WTC11 (cell line): ENCODE measurements at regions of chr12 and their contacts with region 1.

Region 1: DNA sequence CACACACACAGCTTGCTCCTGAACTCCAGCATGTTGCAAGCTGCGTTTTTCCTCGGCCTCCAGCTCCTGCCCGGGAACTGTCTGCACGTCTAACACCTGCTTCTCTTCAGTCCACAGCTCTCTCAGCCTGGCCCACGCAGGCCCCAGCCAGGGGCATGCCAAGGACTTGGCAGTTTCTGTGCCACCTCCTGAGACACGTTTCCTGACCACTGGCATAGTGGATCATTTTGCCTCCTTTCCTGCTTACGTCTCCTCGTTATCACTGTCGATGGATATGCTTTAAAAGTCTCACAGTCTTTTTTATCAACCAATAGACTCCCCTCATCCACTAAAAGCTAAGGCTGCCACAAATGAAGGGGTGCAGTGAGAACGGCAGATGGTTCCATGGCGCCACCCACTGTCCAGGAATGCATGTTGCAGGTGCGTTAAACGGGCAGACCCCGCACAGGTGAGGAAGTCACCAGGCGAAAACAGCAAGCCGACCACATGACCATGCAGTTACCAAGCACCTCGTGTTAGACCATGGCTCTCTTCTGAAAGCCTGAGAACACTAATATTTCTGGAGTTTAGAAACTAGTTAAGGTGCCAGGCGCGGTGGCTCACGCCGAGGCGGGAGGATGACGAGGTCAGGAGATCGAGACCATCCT is 14.7 kb upstream of the TEAD4 start:
- DNase-seq: peak; percentile 90
- ATAC-seq: peak; percentile 98
- H3K4me3 Mint-ChIP-seq: no peak overlapping the region
- H3K27ac Mint-ChIP-seq: peak overlapping the region; percentile 3; the same call in 1 of the 2 replicates
- H3K4me1 Mint-ChIP-seq: peaks cover 3% of the 10 kb centered on the region
- H3K27me3 Mint-ChIP-seq: peaks cover 3% of the 10 kb centered on the region; the same call in 1 of the 2 replicates
- CTCF ChIP-seq: peak; percentile 87

Region 2: DNA sequence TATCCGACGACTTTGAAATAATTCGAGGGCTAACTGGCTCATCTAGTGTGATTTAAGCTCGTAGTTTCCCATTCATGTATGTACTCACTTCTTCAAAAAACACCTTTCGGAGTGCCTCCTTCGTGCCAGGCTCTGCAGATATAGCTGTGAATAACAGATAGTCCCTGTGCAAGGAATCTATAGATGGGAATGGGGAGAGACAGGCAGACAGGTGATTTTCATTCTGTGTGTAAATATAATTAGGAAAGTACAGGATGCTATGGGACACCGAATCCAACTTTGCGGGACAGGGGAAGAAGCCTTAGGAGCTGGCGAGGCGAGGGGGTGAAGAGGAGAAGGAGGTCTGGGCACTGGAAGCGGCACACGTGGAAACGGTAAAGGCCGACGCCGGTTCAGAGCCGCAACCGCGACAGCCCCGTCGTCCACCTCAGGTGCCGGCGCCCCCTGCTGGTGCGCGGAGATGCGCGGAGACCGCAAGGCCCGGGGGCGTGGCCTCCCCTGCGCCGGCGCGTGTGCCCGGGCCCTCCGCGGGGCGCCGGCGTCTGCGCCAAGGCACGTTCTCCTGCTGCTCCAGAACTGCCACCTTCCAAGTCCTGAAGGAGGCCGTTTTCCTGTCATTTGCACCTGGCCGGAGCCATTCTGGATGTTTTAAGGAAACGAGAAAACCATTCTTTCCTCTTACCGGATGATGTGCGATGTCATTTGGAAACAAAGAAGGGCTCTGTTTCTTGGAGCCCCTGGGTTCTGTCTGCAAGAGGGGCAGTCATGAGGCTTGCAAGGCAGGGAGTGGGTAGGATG is 909.7 kb before region 1 on chr12:
- CTCF ChIA-PET with region 1: no interaction called
- POLR2A ChIA-PET with region 1: no interaction called
- DNase-seq: peak; percentile 88
- ATAC-seq: peak; percentile 93
- H3K4me3 Mint-ChIP-seq: peak overlapping the region; percentile 52
- H3K27ac Mint-ChIP-seq: no peak overlapping the region
- H3K4me1 Mint-ChIP-seq: peaks cover 14% of the 10 kb centered on the region
- H3K27me3 Mint-ChIP-seq: peaks cover 40% of the 10 kb centered on the region
- CTCF ChIP-seq: peak; percentile 86

Region 3: DNA sequence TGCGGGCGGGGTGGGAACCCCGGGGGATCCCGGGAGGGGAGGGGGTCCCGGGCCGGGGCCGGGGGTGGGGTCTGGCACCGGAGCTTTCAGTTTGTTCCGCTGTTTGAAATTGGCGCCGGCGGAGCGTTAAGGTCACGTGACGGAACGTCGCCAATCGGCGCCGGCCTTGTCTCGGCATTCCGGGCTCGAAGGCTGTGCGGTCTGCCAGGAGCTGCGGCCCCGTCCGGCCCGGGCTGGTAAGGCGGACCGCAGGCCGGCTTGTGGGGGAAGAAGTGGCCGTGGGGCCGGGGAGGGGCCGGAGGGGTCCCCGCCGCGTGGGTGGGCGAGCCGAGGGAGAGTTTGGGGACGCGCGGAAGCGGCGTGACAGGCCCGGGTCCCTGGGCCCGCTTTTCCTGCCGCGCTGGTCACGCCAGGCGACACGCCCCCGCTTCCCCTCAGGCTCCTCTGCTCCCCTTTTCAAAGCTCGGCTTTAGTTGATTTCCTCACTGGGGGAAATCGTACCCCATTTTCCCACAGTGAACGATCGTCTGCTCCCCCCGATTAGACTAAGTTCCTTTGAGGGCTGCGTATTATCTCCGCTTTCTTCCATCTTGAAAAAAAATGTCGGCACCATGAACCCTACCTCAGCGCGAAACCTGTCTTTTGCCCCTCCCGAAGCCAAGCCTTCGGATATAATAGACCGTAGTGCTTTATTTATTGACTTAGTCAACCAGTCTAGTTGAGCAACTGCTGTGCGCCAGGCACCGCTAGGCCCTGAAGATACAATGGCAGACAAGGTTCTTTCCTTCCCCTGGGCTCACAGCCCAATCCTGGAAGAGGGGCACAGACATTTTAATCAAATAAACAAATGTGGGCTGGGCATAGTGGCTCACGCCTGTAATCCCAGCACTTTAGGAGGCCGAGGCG is 67.2 kb before region 1 on chr12 and contains the starts of genes FOXM1 and RHNO1:
- CTCF ChIA-PET with region 1: interaction called, 92 read pairs
- POLR2A ChIA-PET with region 1: interaction called, 3 read pairs
- DNase-seq: peak; percentile 94
- ATAC-seq: peak; percentile 77
- H3K4me3 Mint-ChIP-seq: peak within 1 kb of the TSS; percentile 99
- H3K27ac Mint-ChIP-seq: peak within 1 kb of the TSS; percentile 94
- H3K4me1 Mint-ChIP-seq: peaks cover 25% of the 10 kb centered on the region
- H3K27me3 Mint-ChIP-seq: no peaks in the 10 kb centered on the region
- CTCF ChIP-seq: no peak
- total RNA-seq, gene FOXM1: 99.6 to 118 TPM (median 100 TPM) in 3 replicates
- total RNA-seq, gene RHNO1: 48.0 to 50.3 TPM (median 49.5 TPM) in 3 replicates

Region 4: GRCh38 chr12:2890388-2891239 is 53.9 kb before region 1 on chr12 and contains the start of gene TULP3:
- CTCF ChIA-PET with region 1: interaction called, 92 read pairs
- POLR2A ChIA-PET with region 1: interaction called, 3 read pairs
- DNase-seq: peak; percentile 98
- ATAC-seq: peak; percentile 93
- H3K4me3 Mint-ChIP-seq: peak within 1 kb of the TSS; percentile 78
- H3K27ac Mint-ChIP-seq: peak within 1 kb of the TSS; percentile 93
- H3K4me1 Mint-ChIP-seq: peaks cover 18% of the 10 kb centered on the region
- H3K27me3 Mint-ChIP-seq: no peaks in the 10 kb centered on the region; the same call in 1 of the 2 replicates
- CTCF ChIP-seq: no peak
- total RNA-seq, gene TULP3: 17.4 to 18.8 TPM (median 18.0 TPM) in 3 replicates

Region 5: DNA sequence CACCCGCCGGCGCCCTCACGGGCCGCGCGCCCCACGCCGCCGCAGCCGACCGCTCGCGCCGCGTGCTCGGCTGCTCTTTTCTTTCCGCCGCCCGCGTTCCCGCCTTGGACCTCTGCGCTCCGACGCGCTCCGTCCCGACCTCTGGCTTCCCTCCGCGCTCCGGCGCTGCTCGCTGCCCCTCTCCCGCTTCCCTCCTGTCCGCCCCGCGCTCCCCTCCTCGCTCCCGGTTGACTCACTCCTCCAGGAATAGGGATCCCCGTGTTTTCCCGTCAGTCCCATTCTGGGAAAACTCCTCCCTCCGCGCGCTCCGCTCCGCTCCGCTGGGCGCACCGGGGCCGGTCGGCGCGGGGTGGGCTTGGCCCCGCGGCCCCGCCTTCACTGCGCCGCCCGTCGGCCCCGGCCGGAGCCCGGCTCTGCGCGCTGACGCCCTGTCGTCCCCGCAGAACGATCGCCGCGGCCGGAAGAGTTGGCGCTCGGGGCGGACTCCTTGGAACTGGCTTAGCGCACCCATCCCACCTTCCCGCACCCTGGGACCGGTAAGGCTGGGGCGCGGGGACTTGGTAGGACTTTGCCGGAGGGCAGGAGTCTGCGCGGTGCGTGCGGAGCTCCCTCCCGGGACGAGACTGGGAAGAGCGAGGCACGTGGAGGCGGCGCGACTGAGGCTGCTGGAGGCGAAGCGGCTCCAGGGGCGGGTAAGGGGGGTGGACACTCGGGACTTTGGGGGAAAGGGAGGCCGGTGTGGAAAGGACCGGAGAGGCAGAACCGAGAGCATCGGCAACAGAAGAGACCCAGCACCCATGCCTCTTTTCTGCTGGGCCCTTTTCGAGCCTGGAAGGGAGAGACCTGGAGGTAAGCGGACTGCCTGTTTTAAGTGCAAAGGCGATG is 15.2 kb after region 1 on chr12:
- CTCF ChIA-PET with region 1: interaction called, 14 read pairs
- POLR2A ChIA-PET with region 1: interaction called, 3 read pairs
- DNase-seq: peak; percentile 49
- ATAC-seq: peak; percentile 7
- H3K4me3 Mint-ChIP-seq: peak overlapping the region; percentile 84
- H3K27ac Mint-ChIP-seq: peak overlapping the region; percentile 52
- H3K4me1 Mint-ChIP-seq: peaks cover 54% of the 10 kb centered on the region
- H3K27me3 Mint-ChIP-seq: no peaks in the 10 kb centered on the region; the same call in 1 of the 2 replicates
- CTCF ChIP-seq: no peak

Region 6: GRCh38 chr12:3034067-3034750 is 89.7 kb after region 1 on chr12:
- CTCF ChIA-PET with region 1: interaction called, 23 read pairs
- POLR2A ChIA-PET with region 1: interaction called, 5 read pairs
- DNase-seq: peak; percentile 89
- ATAC-seq: peak; percentile 96
- H3K4me3 Mint-ChIP-seq: no peak overlapping the region
- H3K27ac Mint-ChIP-seq: peak overlapping the region; percentile 82
- H3K4me1 Mint-ChIP-seq: peaks cover 7% of the 10 kb centered on the region
- H3K27me3 Mint-ChIP-seq: no peaks in the 10 kb centered on the region
- CTCF ChIP-seq: peak; percentile 61